ENCODE measurements at regions of chr1 and their contacts with region 1.

Region 1: GRCh38 chr1:212455803-212456528 is 23.2 kb downstream of the NENF start:
- DNase-seq: peak; percentile 37
- H3K4me3 ChIP-seq: no peak overlapping the region
- H3K27ac ChIP-seq: no peak overlapping the region
- H3K4me1 ChIP-seq: no peaks in the 10 kb centered on the region
- H3K27me3 ChIP-seq: no peaks in the 10 kb centered on the region
- CTCF ChIP-seq: peak; percentile 90 to 98

Region 2: GRCh38 chr1:211698161-211699026 is 757.6 kb before region 1 on chr1:
- CTCF ChIA-PET with region 1: no interaction called
- dilution Hi-C with region 1: no loop called
- in situ Hi-C with region 1: no loop called
- intact Hi-C with region 1: loop called (anchors 5 kb)
- DNase-seq: peak; percentile 64
- H3K4me3 ChIP-seq: no peak overlapping the region
- H3K27ac ChIP-seq: no peak overlapping the region
- H3K4me1 ChIP-seq: peaks cover 5% of the 10 kb centered on the region
- H3K27me3 ChIP-seq: no peaks in the 10 kb centered on the region
- CTCF ChIP-seq: peak; percentile 91 to 99

Region 3: DNA sequence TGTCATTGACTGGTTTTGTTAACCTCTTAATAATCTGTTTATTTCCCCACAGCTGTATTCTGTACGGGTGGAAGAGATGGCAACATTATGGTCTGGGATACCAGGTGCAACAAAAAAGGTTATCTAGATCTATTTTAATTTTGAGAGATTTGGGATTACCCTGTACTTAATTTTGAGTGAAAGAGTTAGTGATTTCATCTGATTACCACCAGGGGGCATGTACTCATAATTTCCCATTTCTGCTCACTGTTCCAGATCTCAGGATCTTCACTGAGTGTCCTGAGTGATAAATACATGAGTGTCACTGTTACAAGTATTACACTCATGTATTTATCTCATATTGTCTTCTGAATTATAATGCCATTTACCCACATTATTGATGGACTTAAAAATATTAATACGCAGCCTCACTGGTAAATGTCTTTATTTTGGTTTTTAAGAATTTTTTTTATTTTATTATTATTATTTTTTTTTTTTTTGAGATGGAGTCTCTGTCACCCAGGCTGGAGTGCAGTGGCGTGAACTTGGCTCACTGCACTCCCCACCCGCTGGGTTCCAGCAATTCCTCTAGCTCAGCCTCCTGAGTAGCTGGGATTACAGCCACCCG is 393.0 kb before region 1 on chr1:
- CTCF ChIA-PET with region 1: no interaction called
- dilution Hi-C with region 1: no loop called
- in situ Hi-C with region 1: loop called in 1 of 2 experiments (anchors 5 kb)
- intact Hi-C with region 1: loop called (anchors 1 kb)
- DNase-seq: peak; percentile 9
- H3K4me3 ChIP-seq: no peak overlapping the region
- H3K27ac ChIP-seq: no peak overlapping the region
- H3K4me1 ChIP-seq: no peaks in the 10 kb centered on the region
- H3K27me3 ChIP-seq: no peaks in the 10 kb centered on the region
- CTCF ChIP-seq: peak; percentile 54 to 67

Region 4: GRCh38 chr1:212162635-212163034 is 293.3 kb before region 1 on chr1:
- CTCF ChIA-PET with region 1: no interaction called
- dilution Hi-C with region 1: no loop called
- in situ Hi-C with region 1: no loop called
- intact Hi-C with region 1: no loop called
- DNase-seq: peak; percentile 73
- H3K4me3 ChIP-seq: no peak overlapping the region
- H3K27ac ChIP-seq: no peak overlapping the region
- H3K4me1 ChIP-seq: peaks cover 21% of the 10 kb centered on the region
- H3K27me3 ChIP-seq: no peaks in the 10 kb centered on the region
- CTCF ChIP-seq: no peak

Region 5: GRCh38 chr1:212291505-212292134 is 164.3 kb before region 1 on chr1:
- CTCF ChIA-PET with region 1: no interaction called
- dilution Hi-C with region 1: no loop called
- in situ Hi-C with region 1: no loop called
- intact Hi-C with region 1: loop called (anchors 5 kb)
- DNase-seq: peak; percentile 50
- H3K4me3 ChIP-seq: no peak overlapping the region
- H3K27ac ChIP-seq: no peak overlapping the region
- H3K4me1 ChIP-seq: peaks cover 35% of the 10 kb centered on the region
- H3K27me3 ChIP-seq: no peaks in the 10 kb centered on the region
- CTCF ChIP-seq: peak; percentile 68 to 81

Region 6: DNA sequence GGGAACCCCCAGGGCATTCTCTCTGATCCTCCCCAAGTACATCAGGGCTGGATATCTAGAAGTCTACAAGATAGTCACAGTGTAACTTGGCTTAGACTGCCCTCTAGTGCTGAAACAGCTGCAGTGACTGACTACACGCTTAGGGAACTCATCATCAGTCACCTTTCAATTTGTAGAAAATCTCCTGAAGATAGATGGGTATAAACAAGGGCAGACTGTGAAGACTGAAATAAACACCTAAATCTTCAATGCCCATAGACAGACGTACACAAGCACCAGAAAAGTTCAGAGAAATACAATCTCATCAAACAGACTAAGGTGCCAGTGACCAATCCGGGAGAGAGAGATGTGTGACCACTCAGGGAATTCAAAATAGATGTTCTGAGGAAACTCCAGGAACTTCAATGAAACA is 87.9 kb before region 1 on chr1:
- CTCF ChIA-PET with region 1: no interaction called
- dilution Hi-C with region 1: loop called (anchors 5 kb)
- in situ Hi-C with region 1: no loop called
- intact Hi-C with region 1: loop called (anchors 1 kb)
- DNase-seq: peak; percentile 54
- H3K4me3 ChIP-seq: no peak overlapping the region
- H3K27ac ChIP-seq: no peak overlapping the region
- H3K4me1 ChIP-seq: no peaks in the 10 kb centered on the region
- H3K27me3 ChIP-seq: no peaks in the 10 kb centered on the region
- CTCF ChIP-seq: peak; percentile 90 to 96

Region 7: DNA sequence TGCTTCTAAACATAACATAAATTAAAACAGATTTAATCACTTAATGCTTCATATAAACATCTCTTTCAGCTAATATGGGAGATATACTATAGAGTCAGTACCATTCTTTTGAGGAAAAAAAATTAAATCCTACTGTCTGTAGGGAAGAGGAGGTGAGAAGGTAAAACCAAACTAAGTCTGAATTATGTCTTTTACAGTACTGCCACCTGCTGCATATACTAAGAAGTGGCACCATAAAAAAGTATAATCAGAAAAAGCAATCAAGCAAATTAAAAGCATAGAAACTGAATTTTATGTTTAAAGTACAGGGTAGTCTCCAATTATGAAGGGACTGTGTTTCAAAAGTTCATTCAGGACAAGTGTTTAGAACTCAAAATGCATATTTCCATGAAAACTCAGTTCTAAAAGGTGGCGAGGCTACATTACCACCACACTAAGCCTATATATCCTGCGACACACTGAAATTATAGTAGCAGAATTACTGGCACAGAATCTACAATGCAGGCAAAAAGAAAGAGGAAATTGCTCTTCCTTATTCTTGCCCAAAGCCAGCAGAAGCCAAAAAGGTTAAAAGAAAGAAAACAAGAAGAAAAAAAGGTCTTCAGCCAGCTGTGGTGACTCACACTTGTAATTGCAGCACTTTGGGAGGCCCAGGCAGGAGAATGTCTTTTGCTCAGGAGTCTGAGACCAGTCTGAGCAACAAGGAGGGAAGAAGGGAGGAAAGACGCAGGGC is 326.6 kb after region 1 on chr1:
- CTCF ChIA-PET with region 1: interaction called, 3 read pairs
- dilution Hi-C with region 1: no loop called
- in situ Hi-C with region 1: no loop called
- intact Hi-C with region 1: loop called (anchors 1 kb)
- DNase-seq: peak; percentile 7
- H3K4me3 ChIP-seq: no peak overlapping the region
- H3K27ac ChIP-seq: no peak overlapping the region
- H3K4me1 ChIP-seq: no peaks in the 10 kb centered on the region
- H3K27me3 ChIP-seq: no peaks in the 10 kb centered on the region
- CTCF ChIP-seq: peak; percentile 52 to 57

Region 8: GRCh38 chr1:212981571-212982328 is 525.8 kb after region 1 on chr1:
- CTCF ChIA-PET with region 1: no interaction called
- dilution Hi-C with region 1: loop called (anchors 25 kb)
- in situ Hi-C with region 1: loop called in 1 of 2 experiments (anchors 25 kb)
- intact Hi-C with region 1: no loop called
- DNase-seq: no peak
- H3K4me3 ChIP-seq: no peak overlapping the region
- H3K27ac ChIP-seq: no peak overlapping the region
- H3K4me1 ChIP-seq: no peaks in the 10 kb centered on the region
- H3K27me3 ChIP-seq: no peaks in the 10 kb centered on the region
- CTCF ChIP-seq: no peak

Measured in mammary epithelial cell (primary cell).